Dendritic cell treated with granulocyte-macrophage colony-stimulating factor and Interleukin-4, amounts not matched to agents 40 ng/mL and 50 ng/mL, for 4 days (primary cell): ENCODE measurements at regions of chr2 and their contacts with region 1.

Region 1: GRCh38 chr2:190069936-190070696 is 7.6 kb upstream of the MSTN start:
- H3K4me3 Mint-ChIP-seq: no peak overlapping the region
- H3K27ac Mint-ChIP-seq: no peak overlapping the region
- H3K4me1 Mint-ChIP-seq: no peaks in the 10 kb centered on the region
- H3K27me3 Mint-ChIP-seq: no peaks in the 10 kb centered on the region

Region 2: GRCh38 chr2:189751080-189751658 is 318.9 kb before region 1 on chr2:
- intact Hi-C with region 1: loop called (anchors 1 kb)
- H3K4me3 Mint-ChIP-seq: no peak overlapping the region
- H3K27ac Mint-ChIP-seq: no peak overlapping the region
- H3K4me1 Mint-ChIP-seq: peaks cover 5% of the 10 kb centered on the region
- H3K27me3 Mint-ChIP-seq: no peaks in the 10 kb centered on the region

Region 3: DNA sequence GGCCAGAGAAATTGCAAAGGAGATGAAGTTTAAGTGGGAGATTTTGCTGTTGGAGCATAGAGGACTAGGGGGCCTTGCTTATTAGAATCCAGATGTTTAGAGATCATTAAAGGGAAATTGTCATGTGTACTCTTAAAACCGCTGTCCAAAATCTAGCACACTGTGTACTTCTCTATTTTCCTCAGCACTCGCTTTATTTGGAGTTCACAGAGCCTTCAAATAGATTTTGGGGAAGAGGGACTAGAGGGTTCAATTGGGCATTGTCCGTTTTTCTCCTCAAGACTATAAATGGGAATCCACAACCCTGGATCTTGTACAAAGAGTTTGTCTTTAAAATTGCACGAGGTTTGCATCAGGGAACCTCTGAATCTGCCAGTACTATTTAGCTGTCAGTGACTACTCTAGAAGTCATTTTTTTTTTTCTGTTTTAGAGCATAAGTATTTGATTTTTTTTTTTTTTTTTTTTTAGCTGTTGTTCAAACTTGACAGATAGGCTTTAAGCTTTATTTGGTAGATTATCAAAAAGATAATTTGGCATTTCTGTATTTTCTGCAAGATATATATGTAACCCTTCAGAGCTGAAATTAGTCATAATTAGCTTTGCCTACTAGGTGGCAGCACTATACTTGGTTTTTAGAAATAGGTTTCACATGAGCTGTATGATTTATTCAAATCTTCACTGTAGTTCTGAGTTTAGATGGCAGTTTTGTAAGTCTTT is 271.6 kb before region 1 on chr2:
- intact Hi-C with region 1: loop called (anchors 1 kb)
- H3K4me3 Mint-ChIP-seq: no peak overlapping the region
- H3K27ac Mint-ChIP-seq: peak overlapping the region; percentile 37
- H3K4me1 Mint-ChIP-seq: peaks cover 17% of the 10 kb centered on the region
- H3K27me3 Mint-ChIP-seq: no peaks in the 10 kb centered on the region

Region 4: GRCh38 chr2:190119257-190119656 is 49.1 kb after region 1 on chr2:
- intact Hi-C with region 1: no loop called
- H3K4me3 Mint-ChIP-seq: peak overlapping the region; percentile 39
- H3K27ac Mint-ChIP-seq: no peak overlapping the region
- H3K4me1 Mint-ChIP-seq: no peaks in the 10 kb centered on the region
- H3K27me3 Mint-ChIP-seq: no peaks in the 10 kb centered on the region